CD4-positive, alpha-beta T cell (primary cell): ENCODE measurements at regions of chr9 and their contacts with region 1.

Region 1: GRCh38 chr9:77142366-77142765 is 35.0 kb upstream of the VPS13A start:
- DNase-seq: no peak
- ATAC-seq: no peak
- H3K4me3 ChIP-seq: no peak overlapping the region
- H3K4me3 Mint-ChIP-seq: no peak overlapping the region
- H3K27ac ChIP-seq: no peak overlapping the region
- H3K27ac Mint-ChIP-seq: no peak overlapping the region
- H3K4me1 ChIP-seq: no peaks in the 10 kb centered on the region
- H3K4me1 Mint-ChIP-seq: no peaks in the 10 kb centered on the region
- H3K27me3 ChIP-seq: no peaks in the 10 kb centered on the region
- H3K27me3 Mint-ChIP-seq: peaks cover 21% of the 10 kb centered on the region
- CTCF ChIP-seq: no peak

Region 2: GRCh38 chr9:76810377-76810957 is 331.9 kb before region 1 on chr9:
- CTCF ChIA-PET with region 1: no interaction called
- POLR2A ChIA-PET with region 1: no interaction called
- intact Hi-C with region 1: loop called (anchors 10 kb)
- DNase-seq: peak in 3 of 14 experiments; percentile 10 to 14 (median 10)
- ATAC-seq: no peak
- H3K4me3 ChIP-seq: no peak overlapping the region
- H3K4me3 Mint-ChIP-seq: no peak overlapping the region
- H3K27ac ChIP-seq: no peak overlapping the region
- H3K27ac Mint-ChIP-seq: no peak overlapping the region
- H3K4me1 ChIP-seq: no peaks in the 10 kb centered on the region
- H3K4me1 Mint-ChIP-seq: no peaks in the 10 kb centered on the region
- H3K27me3 ChIP-seq: peaks cover 2 to 10% of the 10 kb centered on the region in 2 experiments
- H3K27me3 Mint-ChIP-seq: peaks cover 47% of the 10 kb centered on the region
- CTCF ChIP-seq: peak; percentile 8